Right ventricle myocardium inferior (tissue), 1 donor: ENCODE measurements at regions of chr17 and their contacts with region 1.

Region 1: GRCh38 chr17:62065598-62066468 is 755 bp upstream of the MED13 start:
- DNase-seq: peak; percentile 100
- ATAC-seq: peak; percentile 100

Region 2: GRCh38 chr17:61927200-61928165 is 138.3 kb before region 1 on chr17 and contains the start of gene INTS2:
- intact Hi-C with region 1: loop called (anchors 1 kb)
- DNase-seq: peak; percentile 97
- ATAC-seq: peak; percentile 99
- total RNA-seq, gene INTS2: 9.1 TPM

Region 3: DNA sequence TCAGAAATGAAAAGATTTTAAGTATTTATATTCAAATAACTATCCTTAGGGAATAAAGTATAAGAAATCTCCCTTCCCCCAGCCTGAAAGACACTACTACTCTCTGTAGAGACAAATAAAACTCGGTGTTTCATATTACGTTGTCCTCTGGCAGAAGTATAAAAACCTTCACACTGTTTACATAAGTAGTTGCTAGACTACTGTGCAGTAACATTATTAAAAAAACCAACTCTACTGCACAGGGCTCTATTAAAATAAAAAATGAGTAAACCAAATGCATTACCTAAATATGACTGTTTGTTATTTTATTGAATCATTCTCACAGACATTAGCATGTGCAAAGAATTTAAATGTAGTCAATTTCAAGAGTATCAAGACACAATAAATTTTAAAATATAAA is 68.2 kb before region 1 on chr17:
- intact Hi-C with region 1: loop called (anchors 5 kb)
- DNase-seq: no peak
- ATAC-seq: peak; percentile 93